Activated CD4-positive, alpha-beta T cell treated with anti-CD3 and anti-CD28 coated beads, Interleukin-2, amount 10 ng/mL, durations not matched to agents 7 days and 5 days (primary cell): ENCODE measurements at regions of chr1 and their contacts with region 1.

Region 1: GRCh38 chr1:203340112-203340804 is 10.7 kb downstream of the FMOD start:
- DNase-seq: peak; percentile 74
- H3K4me3 Mint-ChIP-seq: no peak overlapping the region
- H3K27ac Mint-ChIP-seq: no peak overlapping the region
- H3K4me1 Mint-ChIP-seq: peaks cover 32% of the 10 kb centered on the region
- H3K27me3 Mint-ChIP-seq: peaks cover 27% of the 10 kb centered on the region

Region 2: DNA sequence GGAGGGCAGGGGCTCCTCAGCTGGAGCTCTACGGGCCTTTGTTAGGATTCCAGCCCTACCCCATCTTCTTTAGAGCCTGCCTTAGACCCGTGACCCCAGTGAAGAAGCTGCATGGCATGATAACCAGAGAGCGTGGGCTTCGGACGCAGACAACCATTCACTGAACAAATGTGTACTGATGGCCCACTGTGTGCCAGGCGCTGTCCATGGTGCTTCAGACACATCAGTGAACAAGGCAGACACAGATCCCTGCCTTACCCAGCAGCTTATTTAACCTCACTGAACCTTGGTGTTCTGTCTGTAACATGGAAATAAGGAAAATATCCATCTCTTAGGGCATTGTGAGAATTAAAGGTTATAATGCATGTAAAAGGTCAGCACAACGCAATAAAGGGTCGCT is 120.3 kb before region 1 on chr1:
- CTCF ChIA-PET with region 1: no interaction called
- POLR2A ChIA-PET with region 1: no interaction called
- DNase-seq: no peak
- H3K4me3 Mint-ChIP-seq: no peak overlapping the region
- H3K27ac Mint-ChIP-seq: no peak overlapping the region
- H3K4me1 Mint-ChIP-seq: no peaks in the 10 kb centered on the region
- H3K27me3 Mint-ChIP-seq: peaks cover 3% of the 10 kb centered on the region

Region 3: GRCh38 chr1:203326830-203327683 is 13.2 kb before region 1 on chr1:
- CTCF ChIA-PET with region 1: interaction called, 158 read pairs
- POLR2A ChIA-PET with region 1: no interaction called
- DNase-seq: peak; percentile 95
- H3K4me3 Mint-ChIP-seq: peak overlapping the region; percentile 73
- H3K27ac Mint-ChIP-seq: peak overlapping the region; percentile 98
- H3K4me1 Mint-ChIP-seq: peaks cover 64% of the 10 kb centered on the region
- H3K27me3 Mint-ChIP-seq: no peaks in the 10 kb centered on the region

Region 4: DNA sequence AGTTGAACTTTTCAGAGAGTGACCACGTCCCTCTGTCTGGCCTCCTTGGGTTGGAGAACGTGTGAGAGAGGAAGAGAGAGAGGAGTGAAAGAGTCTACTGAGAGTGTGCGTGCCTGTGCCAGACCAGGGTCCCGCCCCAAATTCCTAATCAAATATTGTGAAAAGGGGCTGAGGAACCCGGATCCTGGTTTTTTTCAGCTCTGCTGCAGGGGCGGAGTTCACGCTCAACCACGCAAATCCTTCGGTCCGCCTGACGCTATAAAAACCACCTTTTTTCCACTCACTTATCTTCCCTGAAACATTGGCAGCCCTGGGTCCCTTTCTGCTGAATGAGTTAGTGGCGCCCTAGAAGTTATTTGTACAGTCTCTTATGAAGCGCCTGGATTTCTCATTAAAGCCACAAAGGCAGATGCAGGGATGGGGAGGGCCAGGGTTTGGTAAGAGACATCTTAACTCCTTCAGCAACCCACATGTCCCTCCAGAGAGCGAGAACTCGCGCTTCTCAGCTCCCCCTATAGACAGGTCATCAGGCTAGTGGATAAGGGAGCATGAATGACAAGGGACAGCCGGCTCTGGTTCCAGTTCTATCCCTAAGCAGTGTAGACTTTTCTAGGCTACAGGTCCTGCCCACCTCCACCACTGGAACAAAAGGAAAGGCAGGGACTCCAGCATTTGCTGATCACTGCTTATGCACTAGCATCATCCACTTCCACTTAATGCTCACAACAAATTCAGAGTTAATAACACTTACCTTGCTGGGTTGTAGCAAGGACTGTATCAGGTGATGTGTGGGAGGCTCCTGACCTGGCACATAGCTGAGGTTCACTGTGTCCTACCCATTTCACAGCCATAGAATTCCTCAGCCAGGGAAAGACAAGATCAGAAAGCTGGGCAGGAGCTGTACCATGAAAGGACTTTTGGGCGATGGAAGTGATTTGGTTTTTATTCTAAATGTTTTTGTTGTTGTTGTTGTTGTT is 11.1 kb after region 1 on chr1 and contains the start of gene FMOD:
- CTCF ChIA-PET with region 1: interaction called, 14 read pairs
- POLR2A ChIA-PET with region 1: no interaction called
- DNase-seq: no peak
- H3K4me3 Mint-ChIP-seq: no peak within 1 kb of the TSS
- H3K27ac Mint-ChIP-seq: no peak within 1 kb of the TSS
- H3K4me1 Mint-ChIP-seq: no peaks in the 10 kb centered on the region
- H3K27me3 Mint-ChIP-seq: peaks cover 27% of the 10 kb centered on the region
- total RNA-seq, gene FMOD: not detected

Region 5: DNA sequence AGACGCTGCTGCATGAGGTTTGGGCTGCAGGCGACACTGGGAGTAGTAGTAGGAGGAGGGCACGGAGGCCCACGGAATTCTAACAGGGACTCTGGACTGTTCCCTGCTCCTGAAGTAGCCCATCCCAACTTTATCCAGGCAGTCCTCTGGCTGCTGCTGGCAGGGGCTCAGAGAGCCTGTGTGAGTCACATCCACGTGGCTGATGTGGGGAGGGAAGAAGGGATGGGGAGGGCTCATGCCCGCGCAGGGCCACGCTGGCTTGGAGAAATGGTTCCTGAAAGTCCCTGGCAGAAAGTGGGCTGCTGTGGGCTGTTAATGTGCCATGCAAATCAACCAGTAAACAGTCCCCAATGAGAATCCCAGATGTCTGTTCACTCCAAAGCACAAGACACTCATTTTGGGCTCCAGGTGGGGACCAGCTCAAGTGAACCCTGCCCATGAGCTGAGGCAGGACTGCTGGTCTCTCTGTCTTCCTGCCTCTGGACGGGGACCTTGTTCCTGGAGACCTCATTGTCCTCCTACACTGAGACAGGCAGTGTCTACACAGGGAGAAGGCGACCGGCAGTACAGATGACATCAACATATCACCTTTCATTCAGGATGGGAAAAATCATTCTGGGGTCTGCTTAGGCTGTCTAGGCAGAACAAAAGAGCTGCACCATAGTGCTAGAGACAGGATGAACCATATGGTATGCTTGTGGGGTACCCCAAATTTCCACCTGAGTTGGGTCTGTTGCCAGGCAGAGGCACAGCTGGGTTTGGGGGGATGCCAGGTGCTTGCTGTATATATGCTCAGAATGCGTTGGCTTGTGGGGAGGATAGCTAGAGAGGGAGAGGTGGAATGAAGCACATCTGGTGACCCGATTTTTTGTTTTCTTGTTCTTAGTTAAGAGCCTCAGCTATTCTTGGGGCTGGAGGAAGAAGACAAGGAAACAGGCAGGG is 68.5 kb after region 1 on chr1:
- CTCF ChIA-PET with region 1: no interaction called
- POLR2A ChIA-PET with region 1: no interaction called
- DNase-seq: no peak
- H3K4me3 Mint-ChIP-seq: no peak overlapping the region
- H3K27ac Mint-ChIP-seq: no peak overlapping the region
- H3K4me1 Mint-ChIP-seq: no peaks in the 10 kb centered on the region
- H3K27me3 Mint-ChIP-seq: peaks cover 39% of the 10 kb centered on the region

Region 6: DNA sequence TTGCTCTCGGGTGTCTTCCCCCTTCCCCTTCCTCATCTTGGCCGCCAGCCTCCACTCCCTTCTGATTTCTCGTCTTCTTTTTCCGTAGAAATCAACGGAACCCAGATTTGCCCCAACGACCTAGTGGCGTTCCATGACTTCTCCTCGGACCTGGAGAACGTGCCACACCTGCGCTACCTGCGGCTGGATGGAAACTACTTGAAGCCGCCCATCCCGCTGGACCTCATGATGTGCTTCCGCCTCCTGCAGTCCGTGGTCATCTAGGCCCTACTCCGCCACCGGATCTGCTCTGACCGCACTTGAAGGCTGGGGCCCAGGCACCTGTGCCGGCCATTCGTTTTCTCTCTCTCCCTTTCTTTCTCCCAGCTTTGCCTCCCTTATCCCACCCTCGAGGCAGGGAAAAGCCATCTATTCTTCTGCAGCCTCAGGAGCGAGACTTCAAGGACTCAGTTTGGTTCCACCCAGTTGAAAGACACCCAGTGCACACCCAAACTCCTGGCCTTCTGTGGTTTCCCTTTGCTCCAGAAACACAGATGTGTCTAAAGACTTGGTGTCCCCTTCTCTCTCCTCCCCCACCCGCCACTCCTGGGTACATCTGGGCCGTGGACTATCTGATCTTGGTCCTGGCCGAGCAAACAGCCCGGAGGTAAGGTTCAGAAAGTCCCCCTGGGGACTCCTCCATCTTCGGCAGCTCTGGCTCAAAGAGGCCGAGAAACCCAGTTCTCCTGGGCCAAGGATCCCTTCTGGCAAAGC is 146.5 kb after region 1 on chr1:
- CTCF ChIA-PET with region 1: interaction called, 33 read pairs
- POLR2A ChIA-PET with region 1: no interaction called
- DNase-seq: no peak
- H3K4me3 Mint-ChIP-seq: peak overlapping the region; percentile 51
- H3K27ac Mint-ChIP-seq: no peak overlapping the region
- H3K4me1 Mint-ChIP-seq: peaks cover 8% of the 10 kb centered on the region
- H3K27me3 Mint-ChIP-seq: no peaks in the 10 kb centered on the region